ENCODE measurements at regions of chr5 and their contacts with region 1.

Region 1: DNA sequence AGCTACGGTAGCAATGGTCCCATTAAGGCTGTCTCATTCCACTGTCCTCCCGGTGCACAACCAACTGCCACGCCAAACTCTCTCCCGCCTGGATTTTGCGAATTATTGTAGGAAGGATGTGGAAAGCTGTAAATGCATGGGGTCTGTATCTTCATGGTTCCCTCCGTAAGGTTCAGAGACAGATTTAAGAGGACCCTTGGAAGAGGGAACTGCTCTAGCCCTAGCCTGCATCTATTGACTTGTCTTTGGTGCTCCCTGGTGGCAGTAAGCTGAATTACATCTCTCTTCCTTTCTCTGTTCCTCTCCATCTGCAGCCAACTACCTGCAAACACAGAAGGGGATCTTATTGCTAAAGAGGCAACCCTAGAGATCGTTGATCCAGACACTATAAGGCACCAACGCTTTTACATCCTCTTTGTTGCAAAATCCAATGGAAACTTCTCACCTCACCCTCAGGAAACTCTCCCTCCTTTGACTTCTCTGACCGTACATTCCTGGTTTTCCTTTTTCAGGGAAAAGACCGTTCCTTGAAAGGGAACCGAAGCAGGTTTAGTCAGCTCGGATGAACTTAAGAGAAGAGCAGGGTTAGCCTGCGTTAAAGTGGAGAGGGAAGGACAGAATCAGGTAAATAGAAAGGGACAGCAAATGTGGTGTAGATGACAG is 11.9 kb downstream of the CAPSL start:
- DNase-seq: peak; percentile 35 to 79 (median 66)
- ATAC-seq: peak; percentile 56
- H3K4me3 ChIP-seq: no peak overlapping the region
- H3K4me3 Mint-ChIP-seq: peak overlapping the region; percentile 33
- H3K27ac ChIP-seq: no peak overlapping the region
- H3K27ac Mint-ChIP-seq: no peak overlapping the region
- H3K4me1 ChIP-seq: peaks cover 14% of the 10 kb centered on the region
- H3K4me1 Mint-ChIP-seq: peaks cover 36% of the 10 kb centered on the region
- H3K27me3 ChIP-seq: no peaks in the 10 kb centered on the region
- H3K27me3 Mint-ChIP-seq: peaks cover 4% of the 10 kb centered on the region
- CTCF ChIP-seq: peak; percentile 84

Region 2: DNA sequence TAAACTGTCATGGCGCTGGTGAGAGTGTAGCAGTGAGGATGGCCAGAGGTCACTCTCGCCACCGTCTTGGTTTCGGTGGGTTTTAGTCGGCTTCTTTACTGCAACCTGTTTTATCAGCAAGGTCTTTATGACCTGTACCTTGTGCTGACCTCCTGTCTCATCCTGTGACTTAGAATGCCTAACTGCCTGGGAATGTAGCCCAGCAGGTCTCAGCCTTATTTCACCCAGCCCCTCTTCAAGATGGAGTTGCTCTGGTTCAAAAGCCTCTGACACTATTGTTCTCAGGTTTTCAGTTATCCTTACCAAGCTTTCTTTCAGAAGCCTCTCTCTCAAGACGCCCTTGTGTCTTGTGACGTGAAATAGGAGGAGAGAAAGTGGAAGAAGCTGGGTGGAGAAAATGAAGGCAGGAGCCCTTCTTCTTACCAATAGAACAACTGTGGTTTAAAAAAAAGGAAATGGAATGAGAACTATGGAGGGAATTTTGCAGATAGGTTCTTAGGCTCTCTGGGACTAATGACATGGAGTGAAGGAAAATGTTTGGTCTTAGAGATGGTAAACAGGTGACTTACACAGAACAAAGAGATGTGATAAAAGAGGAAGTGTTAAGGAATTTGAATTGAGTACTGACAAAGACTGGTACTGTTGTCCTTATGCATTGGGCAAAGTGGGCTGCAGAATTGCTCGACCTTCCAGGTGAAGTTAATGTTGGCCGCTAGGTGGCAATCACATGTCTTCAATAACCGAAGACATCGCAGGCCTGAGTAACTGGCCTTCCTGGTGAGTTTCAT is 1403.7 kb before region 1 on chr5:
- CTCF ChIA-PET with region 1: interaction called, 6 read pairs
- POLR2A ChIA-PET with region 1: no interaction called
- intact Hi-C with region 1: loop called in 1 of 2 experiments (anchors 5 kb)
- DNase-seq: peak in 8 of 9 experiments; percentile 21 to 70 (median 56)
- ATAC-seq: no peak
- H3K4me3 ChIP-seq: no peak overlapping the region
- H3K4me3 Mint-ChIP-seq: no peak overlapping the region
- H3K27ac ChIP-seq: no peak overlapping the region
- H3K27ac Mint-ChIP-seq: no peak overlapping the region
- H3K4me1 ChIP-seq: no peaks in the 10 kb centered on the region
- H3K4me1 Mint-ChIP-seq: peaks cover 2% of the 10 kb centered on the region
- H3K27me3 ChIP-seq: no peaks in the 10 kb centered on the region
- H3K27me3 Mint-ChIP-seq: peaks cover 4% of the 10 kb centered on the region
- CTCF ChIP-seq: peak; percentile 72

Region 3: DNA sequence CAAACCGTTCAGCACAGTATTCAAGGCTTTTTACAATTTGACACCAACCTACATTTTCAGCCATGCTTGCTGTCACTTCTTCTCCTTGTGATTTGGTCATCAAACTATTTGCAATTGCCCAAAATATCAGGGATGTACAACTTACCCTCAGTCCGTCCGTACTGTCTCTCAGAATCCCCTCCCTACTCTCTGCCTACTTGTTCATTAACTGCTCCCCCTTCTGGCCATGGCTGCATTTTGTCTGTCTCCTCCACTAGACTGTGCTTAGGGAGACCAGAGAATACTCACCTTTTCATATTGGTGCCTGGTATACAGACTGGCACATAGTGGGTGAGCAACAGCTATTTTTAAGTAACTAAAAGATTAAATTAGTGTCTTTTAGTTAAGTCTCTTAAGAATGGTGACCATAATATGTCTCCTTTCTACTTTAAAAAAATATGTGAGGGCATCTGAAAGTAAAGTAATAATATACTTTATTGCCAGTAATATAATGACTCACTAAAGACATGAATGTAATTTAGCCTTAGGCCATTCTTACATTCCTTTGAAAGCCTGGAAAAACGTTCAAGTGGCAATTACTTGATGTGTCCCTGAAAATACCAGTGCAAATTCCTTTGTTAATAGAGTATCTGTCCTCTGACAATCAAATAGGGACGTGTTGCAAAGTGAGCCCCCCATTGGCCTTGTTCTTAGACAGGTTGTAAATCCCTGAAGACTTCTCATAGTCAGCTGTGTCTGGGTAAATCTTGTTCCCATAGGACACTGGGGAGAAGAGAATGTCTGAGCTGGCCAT is 724.0 kb before region 1 on chr5:
- CTCF ChIA-PET with region 1: no interaction called
- POLR2A ChIA-PET with region 1: no interaction called
- intact Hi-C with region 1: loop called in 1 of 2 experiments (anchors 10 kb)
- DNase-seq: peak in 5 of 9 experiments; percentile 11 to 29 (median 25)
- ATAC-seq: no peak
- H3K4me3 ChIP-seq: no peak overlapping the region
- H3K4me3 Mint-ChIP-seq: no peak overlapping the region
- H3K27ac ChIP-seq: no peak overlapping the region
- H3K27ac Mint-ChIP-seq: no peak overlapping the region
- H3K4me1 ChIP-seq: no peaks in the 10 kb centered on the region
- H3K4me1 Mint-ChIP-seq: no peaks in the 10 kb centered on the region
- H3K27me3 ChIP-seq: no peaks in the 10 kb centered on the region
- H3K27me3 Mint-ChIP-seq: peaks cover 14% of the 10 kb centered on the region
- CTCF ChIP-seq: peak; percentile 28

Region 4: DNA sequence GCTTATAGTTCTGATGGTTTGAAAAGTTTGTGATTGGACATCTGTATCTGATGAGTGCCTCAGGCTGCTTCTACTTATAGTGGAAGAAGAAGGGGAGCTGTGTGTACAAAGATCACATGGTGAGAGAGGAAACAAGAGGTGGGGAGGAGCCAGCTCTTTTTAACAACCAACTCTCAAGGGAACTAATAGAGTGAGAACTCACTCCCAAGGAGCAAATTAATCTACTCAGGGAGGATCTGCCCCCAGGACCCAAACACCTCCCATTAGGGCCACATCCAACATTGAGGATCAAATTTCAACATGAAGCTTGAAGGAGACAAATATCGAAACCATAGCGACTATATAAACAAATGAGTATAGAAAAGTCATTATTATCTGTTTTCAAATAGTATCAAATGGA is 631.5 kb before region 1 on chr5:
- CTCF ChIA-PET with region 1: no interaction called
- POLR2A ChIA-PET with region 1: no interaction called
- intact Hi-C with region 1: no loop called
- DNase-seq: no peak
- ATAC-seq: no peak
- H3K4me3 ChIP-seq: no peak overlapping the region
- H3K4me3 Mint-ChIP-seq: no peak overlapping the region
- H3K27ac ChIP-seq: no peak overlapping the region
- H3K27ac Mint-ChIP-seq: no peak overlapping the region
- H3K4me1 ChIP-seq: no peaks in the 10 kb centered on the region
- H3K4me1 Mint-ChIP-seq: no peaks in the 10 kb centered on the region
- H3K27me3 ChIP-seq: no peaks in the 10 kb centered on the region
- H3K27me3 Mint-ChIP-seq: peaks cover 3% of the 10 kb centered on the region
- CTCF ChIP-seq: no peak

Region 5: GRCh38 chr5:35626108-35626507 is 300.4 kb before region 1 on chr5:
- CTCF ChIA-PET with region 1: interaction called, 30 read pairs
- POLR2A ChIA-PET with region 1: interaction called, 3 read pairs
- intact Hi-C with region 1: no loop called
- DNase-seq: no peak
- ATAC-seq: no peak
- H3K4me3 ChIP-seq: no peak overlapping the region
- H3K4me3 Mint-ChIP-seq: no peak overlapping the region
- H3K27ac ChIP-seq: no peak overlapping the region
- H3K27ac Mint-ChIP-seq: no peak overlapping the region
- H3K4me1 ChIP-seq: no peaks in the 10 kb centered on the region
- H3K4me1 Mint-ChIP-seq: peaks cover 4% of the 10 kb centered on the region
- H3K27me3 ChIP-seq: no peaks in the 10 kb centered on the region
- H3K27me3 Mint-ChIP-seq: no peaks in the 10 kb centered on the region
- CTCF ChIP-seq: no peak

Region 6: DNA sequence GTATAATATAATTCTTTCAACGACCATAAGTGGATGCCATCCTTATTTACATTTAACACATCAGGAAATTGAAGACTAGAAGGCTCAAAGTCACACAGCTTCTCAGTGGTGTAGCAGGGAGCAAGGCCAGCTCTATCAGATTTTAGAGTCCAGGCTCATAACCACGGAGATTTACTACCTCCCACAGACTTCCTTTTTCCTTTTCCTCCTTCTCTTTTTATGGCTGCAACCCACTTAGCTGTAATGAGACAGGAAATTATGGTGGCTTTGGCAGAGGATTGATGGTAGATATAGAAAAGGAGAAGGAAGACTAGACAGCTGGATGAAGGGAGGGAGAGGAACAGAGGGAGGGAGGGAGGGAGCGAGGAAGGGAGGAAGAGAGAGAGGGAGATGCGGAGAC is 261.4 kb before region 1 on chr5:
- CTCF ChIA-PET with region 1: interaction called, 31 read pairs
- POLR2A ChIA-PET with region 1: no interaction called
- intact Hi-C with region 1: no loop called
- DNase-seq: no peak
- ATAC-seq: no peak
- H3K4me3 ChIP-seq: no peak overlapping the region
- H3K4me3 Mint-ChIP-seq: no peak overlapping the region
- H3K27ac ChIP-seq: no peak overlapping the region
- H3K27ac Mint-ChIP-seq: peak overlapping the region; percentile 72
- H3K4me1 ChIP-seq: peaks cover 33% of the 10 kb centered on the region
- H3K4me1 Mint-ChIP-seq: peaks cover 46% of the 10 kb centered on the region
- H3K27me3 ChIP-seq: peaks cover 0 to 3% of the 10 kb centered on the region in 2 experiments
- H3K27me3 Mint-ChIP-seq: no peaks in the 10 kb centered on the region
- CTCF ChIP-seq: no peak

Region 7: DNA sequence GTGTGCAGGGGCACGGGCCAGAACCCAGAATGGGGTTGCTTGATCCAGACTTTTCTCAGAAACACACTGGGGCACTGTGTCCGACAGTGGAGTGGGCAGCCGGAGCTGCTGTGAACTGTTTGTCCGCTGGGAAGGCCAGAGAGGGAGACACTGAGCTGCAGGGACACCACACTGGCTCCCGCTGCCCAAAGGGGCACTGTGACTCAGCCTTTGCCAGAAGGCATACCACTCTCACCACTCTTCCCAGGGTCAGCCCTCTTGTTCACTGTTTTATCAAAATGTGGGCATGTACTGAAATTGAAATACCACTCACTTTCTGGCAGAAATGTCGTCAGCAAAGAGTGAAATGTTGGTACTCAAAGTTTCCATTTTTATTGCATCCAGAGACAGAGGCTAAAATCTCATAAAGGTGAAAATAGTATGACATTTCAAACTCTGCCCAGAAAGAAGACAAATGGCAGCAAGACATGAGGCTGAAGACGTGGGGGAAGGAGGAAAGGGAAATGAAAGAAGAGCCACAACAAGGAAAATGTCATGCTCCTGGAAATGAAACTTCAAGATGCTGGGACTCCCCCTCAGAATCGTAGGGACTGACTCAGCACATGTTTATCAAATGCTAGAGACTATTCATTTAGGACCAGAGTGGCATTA is 74.3 kb before region 1 on chr5:
- CTCF ChIA-PET with region 1: interaction called, 6 read pairs
- POLR2A ChIA-PET with region 1: interaction called, 3 read pairs
- intact Hi-C with region 1: loop called in 1 of 2 experiments (anchors 1 kb)
- DNase-seq: peak in 5 of 9 experiments; percentile 30 to 83 (median 42)
- ATAC-seq: no peak
- H3K4me3 ChIP-seq: peak overlapping the region; percentile 32 to 47
- H3K4me3 Mint-ChIP-seq: peak overlapping the region; percentile 88
- H3K27ac ChIP-seq: peak overlapping the region; percentile 94 to 97
- H3K27ac Mint-ChIP-seq: peak overlapping the region; percentile 100
- H3K4me1 ChIP-seq: peaks cover 64% of the 10 kb centered on the region
- H3K4me1 Mint-ChIP-seq: peaks cover 80% of the 10 kb centered on the region
- H3K27me3 ChIP-seq: no peaks in the 10 kb centered on the region
- H3K27me3 Mint-ChIP-seq: no peaks in the 10 kb centered on the region
- CTCF ChIP-seq: no peak

Region 8: DNA sequence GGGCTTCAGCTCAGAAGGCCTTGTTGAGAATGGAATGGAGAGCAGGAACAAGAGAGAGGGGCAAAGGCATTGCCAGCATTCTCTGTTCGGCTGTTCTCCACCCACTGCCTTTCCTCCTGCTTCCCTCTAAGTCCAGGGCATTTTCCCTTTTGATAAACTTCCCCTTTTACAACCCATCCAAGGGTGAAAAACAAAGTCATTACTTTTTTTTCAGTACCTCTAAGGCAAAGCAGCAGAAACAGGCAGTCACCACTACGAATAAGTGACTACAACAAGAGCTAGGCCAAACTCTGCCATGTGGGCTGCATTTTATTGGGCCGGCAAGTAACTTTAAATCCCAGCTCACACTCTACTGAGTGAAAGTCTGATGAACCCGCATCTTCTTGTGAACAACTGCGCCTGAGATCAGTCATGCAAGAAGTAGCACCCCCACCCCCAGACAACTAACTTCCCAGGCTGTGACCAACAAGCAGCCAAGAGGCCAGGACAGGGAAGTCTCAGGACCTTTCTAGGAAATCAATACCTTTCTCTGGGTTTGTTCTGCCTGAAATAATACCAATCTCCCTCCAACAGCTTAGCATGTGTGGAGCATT is 56.7 kb before region 1 on chr5:
- CTCF ChIA-PET with region 1: interaction called, 4 read pairs
- POLR2A ChIA-PET with region 1: interaction called, 3 read pairs
- intact Hi-C with region 1: loop called in 1 of 2 experiments (anchors 2 kb)
- DNase-seq: no peak
- ATAC-seq: peak; percentile 30
- H3K4me3 ChIP-seq: no peak overlapping the region
- H3K4me3 Mint-ChIP-seq: no peak overlapping the region
- H3K27ac ChIP-seq: peak overlapping the region in 1 of 2 experiments; percentile 17
- H3K27ac Mint-ChIP-seq: peak overlapping the region; percentile 85
- H3K4me1 ChIP-seq: peaks cover 61% of the 10 kb centered on the region
- H3K4me1 Mint-ChIP-seq: peaks cover 87% of the 10 kb centered on the region
- H3K27me3 ChIP-seq: no peaks in the 10 kb centered on the region
- H3K27me3 Mint-ChIP-seq: no peaks in the 10 kb centered on the region
- CTCF ChIP-seq: no peak